ENCODE measurements at regions of chr13 and their contacts with region 1.

Region 1: GRCh38 chr13:99356158-99357091 is 49.2 kb upstream of the GPR183 start:
- DNase-seq: peak; percentile 48
- ATAC-seq: peak; percentile 25
- H3K4me3 Mint-ChIP-seq: peak overlapping the region; percentile 42
- H3K27ac Mint-ChIP-seq: peak overlapping the region; percentile 92
- H3K4me1 Mint-ChIP-seq: peaks cover 99% of the 10 kb centered on the region
- H3K27me3 Mint-ChIP-seq: no peaks in the 10 kb centered on the region

Region 2: DNA sequence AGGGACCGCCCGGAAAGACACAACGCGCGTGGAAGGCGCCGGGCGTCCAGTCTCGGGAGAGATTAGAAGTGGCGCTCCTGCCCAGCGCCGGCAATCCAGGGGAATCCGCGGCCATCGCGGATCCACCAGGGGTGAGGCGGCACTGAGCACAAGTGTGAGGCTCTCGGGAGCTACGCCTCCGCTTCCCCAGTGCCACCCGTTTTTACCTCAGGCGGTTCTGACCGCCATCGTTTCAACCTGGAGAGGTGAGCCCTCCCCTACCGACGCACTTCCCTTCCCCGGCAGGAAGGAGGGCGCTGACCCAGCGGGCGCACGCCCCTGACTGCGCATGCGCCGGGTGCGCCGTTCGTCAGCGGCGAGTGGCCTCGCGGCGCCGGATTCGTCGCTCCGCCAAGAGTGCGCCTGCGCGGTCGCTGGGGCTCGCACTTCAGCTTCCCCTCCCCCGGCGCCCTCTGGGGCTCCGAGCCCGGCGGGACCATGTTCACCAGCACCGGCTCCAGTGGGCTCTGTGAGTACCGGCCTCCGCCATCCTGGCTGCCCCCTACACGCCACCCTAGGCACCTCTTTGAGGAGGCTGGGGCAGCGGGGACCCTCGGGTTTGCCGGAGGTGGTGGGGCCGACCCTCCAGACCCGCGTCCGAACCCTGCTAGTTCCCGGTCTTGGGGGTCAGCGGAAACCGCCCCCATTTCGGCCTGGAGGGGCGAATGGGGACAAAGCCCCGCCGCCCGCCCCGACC is 155.8 kb before region 1 on chr13 and contains the start of gene UBAC2:
- CTCF ChIA-PET with region 1: interaction called, 3 read pairs
- POLR2A ChIA-PET with region 1: interaction called, 3 read pairs
- intact Hi-C with region 1: loop called (anchors 1 to 5 kb)
- DNase-seq: peak; percentile 98
- ATAC-seq: peak; percentile 77
- H3K4me3 Mint-ChIP-seq: peak within 1 kb of the TSS; percentile 82
- H3K27ac Mint-ChIP-seq: peak within 1 kb of the TSS; percentile 97
- H3K4me1 Mint-ChIP-seq: peaks cover 62% of the 10 kb centered on the region
- H3K27me3 Mint-ChIP-seq: no peaks in the 10 kb centered on the region
- total RNA-seq, gene UBAC2: 48.4 to 56.3 TPM

Region 3: GRCh38 chr13:99301913-99302636 is 54.4 kb before region 1 on chr13:
- CTCF ChIA-PET with region 1: interaction called, 21 read pairs
- POLR2A ChIA-PET with region 1: interaction called, 18 read pairs
- intact Hi-C with region 1: loop called (anchors 1 kb)
- DNase-seq: no peak
- ATAC-seq: no peak
- H3K4me3 Mint-ChIP-seq: peak overlapping the region; percentile 85
- H3K27ac Mint-ChIP-seq: peak overlapping the region; percentile 99
- H3K4me1 Mint-ChIP-seq: peaks cover 69% of the 10 kb centered on the region
- H3K27me3 Mint-ChIP-seq: no peaks in the 10 kb centered on the region

Region 4: DNA sequence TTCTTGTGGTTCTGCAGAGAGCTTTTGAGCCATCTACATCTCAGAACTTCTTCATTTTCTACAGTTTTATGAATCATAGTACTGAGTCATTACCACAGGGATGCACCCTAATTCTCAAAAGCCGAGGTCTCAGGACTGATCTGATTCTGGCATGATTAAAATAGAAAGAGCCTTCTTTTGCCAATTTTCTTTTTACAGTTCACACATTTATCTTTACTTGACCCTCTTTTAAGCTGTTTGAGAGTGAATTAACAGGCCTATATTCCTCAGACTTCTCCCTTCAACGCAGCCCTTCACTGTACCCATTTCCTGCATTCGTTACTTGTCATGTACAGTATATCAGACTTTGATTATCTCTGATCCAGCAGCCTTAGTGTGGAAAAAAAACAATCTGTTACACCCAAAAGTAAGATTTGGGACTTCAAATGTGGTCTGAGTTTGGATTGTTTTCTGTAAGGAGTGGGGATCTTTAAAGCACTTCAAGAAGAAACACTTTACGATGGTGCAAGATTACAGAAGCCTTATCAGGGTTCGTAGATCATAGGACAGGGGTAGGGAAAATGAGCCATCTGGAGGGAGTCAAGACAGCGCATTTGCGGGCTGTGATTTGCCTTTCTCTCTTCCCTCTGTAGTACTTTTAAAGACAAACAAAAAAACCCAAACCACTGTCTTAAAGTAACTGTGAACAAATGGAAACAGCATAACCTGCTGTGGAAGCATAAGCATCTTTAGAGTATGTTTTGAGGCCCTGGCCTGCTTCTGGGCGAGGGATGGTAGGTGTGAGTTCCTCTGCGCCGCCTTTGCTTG is 33.9 kb before region 1 on chr13:
- CTCF ChIA-PET with region 1: interaction called, 34 read pairs
- POLR2A ChIA-PET with region 1: interaction called, 19 read pairs
- intact Hi-C with region 1: loop called (anchors 1 kb)
- DNase-seq: peak; percentile 66
- ATAC-seq: peak; percentile 78
- H3K4me3 Mint-ChIP-seq: peak overlapping the region; percentile 26
- H3K27ac Mint-ChIP-seq: peak overlapping the region; percentile 93
- H3K4me1 Mint-ChIP-seq: peaks cover 81% of the 10 kb centered on the region
- H3K27me3 Mint-ChIP-seq: no peaks in the 10 kb centered on the region

Region 5: GRCh38 chr13:99386911-99387788 is 30.7 kb after region 1 on chr13:
- CTCF ChIA-PET with region 1: interaction called, 18 read pairs
- POLR2A ChIA-PET with region 1: interaction called, 16 read pairs
- intact Hi-C with region 1: loop called (anchors 1 kb)
- DNase-seq: peak; percentile 94
- ATAC-seq: peak; percentile 62
- H3K4me3 Mint-ChIP-seq: no peak overlapping the region
- H3K27ac Mint-ChIP-seq: peak overlapping the region; percentile 76
- H3K4me1 Mint-ChIP-seq: peaks cover 63% of the 10 kb centered on the region
- H3K27me3 Mint-ChIP-seq: no peaks in the 10 kb centered on the region

Region 6: DNA sequence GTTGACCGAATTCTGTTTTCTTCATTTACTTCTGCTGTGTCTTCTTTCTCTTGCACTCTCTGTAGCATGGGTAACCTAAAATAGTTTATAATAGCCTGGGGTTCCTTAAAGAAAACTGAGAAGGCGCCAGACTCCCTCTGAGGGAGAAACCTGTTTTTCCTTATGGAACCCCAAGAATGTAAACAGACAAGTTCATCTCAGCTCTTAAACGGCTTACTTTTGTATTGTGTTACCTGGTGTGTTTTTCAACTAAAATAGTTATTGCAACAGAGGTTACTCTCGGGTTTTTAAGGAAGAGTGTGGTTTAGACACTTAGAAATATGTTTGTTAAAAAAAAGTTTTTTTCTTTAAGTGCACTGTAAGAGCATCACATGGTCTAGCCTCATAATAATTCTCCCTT is 121.1 kb after region 1 on chr13:
- CTCF ChIA-PET with region 1: no interaction called
- POLR2A ChIA-PET with region 1: no interaction called
- intact Hi-C with region 1: no loop called
- DNase-seq: no peak
- ATAC-seq: no peak
- H3K4me3 Mint-ChIP-seq: no peak overlapping the region
- H3K27ac Mint-ChIP-seq: no peak overlapping the region
- H3K4me1 Mint-ChIP-seq: peaks cover 8% of the 10 kb centered on the region
- H3K27me3 Mint-ChIP-seq: no peaks in the 10 kb centered on the region

Measured in activated CD4-positive, alpha-beta T cell treated with anti-CD3 and anti-CD28 coated beads for 36 hours (primary cell).